ENCODE measurements at regions of chr11 and their contacts with region 1.

Region 1: DNA sequence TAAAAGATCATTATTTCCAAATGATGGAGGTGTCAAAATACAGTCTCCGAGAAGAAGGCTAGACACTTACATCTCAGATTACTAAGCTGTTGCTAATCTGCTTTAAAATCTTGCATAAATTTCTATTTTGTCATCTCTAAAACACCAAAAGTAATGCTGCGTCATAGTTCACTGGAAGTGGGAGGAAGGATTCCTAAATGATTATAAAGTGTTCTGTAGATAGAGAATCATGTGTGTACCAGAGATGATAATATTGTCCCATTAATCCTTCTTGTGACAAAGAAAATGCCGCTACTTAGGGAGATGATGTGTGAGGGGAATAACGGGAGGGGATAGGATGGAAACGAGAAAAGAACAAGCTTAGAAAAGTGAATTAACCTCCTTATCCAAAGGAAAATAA is 268.6 kb downstream of the JRKL start:
- DNase-seq: no peak
- ATAC-seq: no peak
- H3K4me3 ChIP-seq: no peak overlapping the region
- H3K27ac ChIP-seq: no peak overlapping the region
- H3K4me1 ChIP-seq: no peaks in the 10 kb centered on the region
- H3K27me3 ChIP-seq: no peaks in the 10 kb centered on the region
- CTCF ChIP-seq: no peak

Region 2: GRCh38 chr11:96680211-96681018 is 22.0 kb after region 1 on chr11:
- intact Hi-C with region 1: loop called in 1 of 10 experiments (anchors 2 kb)
- DNase-seq: no peak
- ATAC-seq: no peak
- H3K4me3 ChIP-seq: no peak overlapping the region
- H3K27ac ChIP-seq: no peak overlapping the region
- H3K4me1 ChIP-seq: no peaks in the 10 kb centered on the region
- H3K27me3 ChIP-seq: no peaks in the 10 kb centered on the region
- CTCF ChIP-seq: no peak